Natural killer cell (primary cell): ENCODE measurements at regions of chr6 and their contacts with region 1.

Region 1: DNA sequence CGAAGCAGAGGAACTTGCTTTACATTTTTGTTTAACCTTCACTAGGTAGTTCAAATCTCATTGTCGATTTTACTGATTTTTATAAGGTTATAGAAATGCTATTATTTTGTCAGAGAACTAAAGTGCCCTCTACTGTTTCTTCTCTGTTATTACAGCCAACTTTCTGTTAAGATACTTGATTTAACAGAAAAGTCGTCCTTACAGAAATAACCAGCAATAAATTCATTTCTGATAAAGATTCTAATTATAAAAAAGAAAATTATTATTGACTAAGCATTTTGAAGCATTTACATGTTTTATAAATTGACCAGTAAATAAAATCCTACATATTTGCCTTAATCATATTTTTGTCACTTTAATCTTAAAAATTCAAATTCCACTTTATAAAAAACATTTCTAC is 60.8 kb downstream of the OGFRL1 start:
- DNase-seq: peak in 1 of 2 donors; percentile 49
- ATAC-seq: peak in 1 of 3 donors; percentile 40
- H3K4me3 ChIP-seq: no peak overlapping the region
- H3K4me3 Mint-ChIP-seq: no peak overlapping the region
- H3K27ac ChIP-seq: no peak overlapping the region
- H3K27ac Mint-ChIP-seq: no peak overlapping the region
- H3K4me1 ChIP-seq: no peaks in the 10 kb centered on the region
- H3K4me1 Mint-ChIP-seq: no peaks in the 10 kb centered on the region
- H3K27me3 ChIP-seq: no peaks in the 10 kb centered on the region
- H3K27me3 Mint-ChIP-seq: peaks cover 3 to 6% of the 10 kb centered on the region in 2 donors
- CTCF ChIP-seq: peak; percentile 81

Region 2: DNA sequence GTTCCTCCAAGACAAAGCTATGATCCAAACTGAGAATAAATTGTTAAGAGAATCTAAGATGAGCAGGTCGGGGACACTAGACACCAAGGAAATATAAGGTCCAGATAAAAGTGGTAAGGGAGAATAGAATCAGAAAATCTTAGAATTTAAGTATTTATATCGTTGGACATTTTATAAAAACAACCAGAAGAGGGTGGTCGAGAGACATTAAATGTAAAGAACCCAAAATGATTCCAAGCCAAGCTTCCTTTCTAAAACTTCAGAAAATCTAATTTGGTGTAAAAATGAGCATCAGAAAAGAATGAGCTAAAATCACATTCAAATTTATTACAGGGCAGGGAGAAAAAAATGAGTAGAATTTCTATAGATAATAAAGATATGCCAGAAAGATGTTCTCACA is 158.6 kb before region 1 on chr6:
- intact Hi-C with region 1: loop called (anchors 1 kb)
- DNase-seq: peak in 1 of 2 donors; percentile 49
- ATAC-seq: no peak
- H3K4me3 ChIP-seq: no peak overlapping the region
- H3K4me3 Mint-ChIP-seq: no peak overlapping the region
- H3K27ac ChIP-seq: no peak overlapping the region
- H3K27ac Mint-ChIP-seq: no peak overlapping the region
- H3K4me1 ChIP-seq: no peaks in the 10 kb centered on the region
- H3K4me1 Mint-ChIP-seq: no peaks in the 10 kb centered on the region
- H3K27me3 ChIP-seq: no peaks in the 10 kb centered on the region
- H3K27me3 Mint-ChIP-seq: peaks cover 0 to 13% of the 10 kb centered on the region in 2 donors
- CTCF ChIP-seq: peak; percentile 55

Region 3: DNA sequence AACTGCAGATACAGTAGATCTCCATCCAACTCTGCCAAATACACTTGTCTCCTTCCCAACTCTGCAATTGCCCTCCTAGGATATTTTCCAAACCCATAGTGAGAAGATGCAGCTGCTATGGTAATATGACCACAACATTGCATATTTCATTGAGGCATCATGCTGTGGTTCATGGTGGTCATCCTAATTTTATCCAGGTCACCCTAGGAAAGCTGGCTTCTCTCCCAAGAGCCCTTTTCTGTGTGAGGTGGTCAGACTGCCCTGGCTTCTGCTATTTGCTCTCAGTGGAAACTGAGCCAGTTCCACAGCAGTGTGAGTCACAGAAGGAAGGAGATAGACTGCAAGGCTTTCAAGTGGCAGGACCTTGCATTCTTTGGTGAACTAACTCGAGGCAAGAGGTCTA is 55.3 kb before region 1 on chr6:
- intact Hi-C with region 1: no loop called
- DNase-seq: no peak
- ATAC-seq: no peak
- H3K4me3 ChIP-seq: no peak overlapping the region
- H3K4me3 Mint-ChIP-seq: no peak overlapping the region
- H3K27ac ChIP-seq: no peak overlapping the region
- H3K27ac Mint-ChIP-seq: no peak overlapping the region
- H3K4me1 ChIP-seq: peaks cover 17% of the 10 kb centered on the region
- H3K4me1 Mint-ChIP-seq: peaks cover 30 to 34% of the 10 kb centered on the region in 2 donors
- H3K27me3 ChIP-seq: no peaks in the 10 kb centered on the region
- H3K27me3 Mint-ChIP-seq: no peaks in the 10 kb centered on the region
- CTCF ChIP-seq: no peak

Region 4: GRCh38 chr6:71404145-71404966 is 55.0 kb after region 1 on chr6:
- intact Hi-C with region 1: no loop called
- DNase-seq: no peak
- ATAC-seq: no peak
- H3K4me3 ChIP-seq: no peak overlapping the region
- H3K4me3 Mint-ChIP-seq: no peak overlapping the region
- H3K27ac ChIP-seq: no peak overlapping the region
- H3K27ac Mint-ChIP-seq: no peak overlapping the region
- H3K4me1 ChIP-seq: no peaks in the 10 kb centered on the region
- H3K4me1 Mint-ChIP-seq: no peaks in the 10 kb centered on the region
- H3K27me3 ChIP-seq: no peaks in the 10 kb centered on the region
- H3K27me3 Mint-ChIP-seq: peaks cover 0 to 27% of the 10 kb centered on the region in 2 donors
- CTCF ChIP-seq: no peak

Region 5: GRCh38 chr6:71457929-71458328 is 108.5 kb after region 1 on chr6:
- intact Hi-C with region 1: no loop called
- DNase-seq: no peak
- ATAC-seq: no peak
- H3K4me3 ChIP-seq: no peak overlapping the region
- H3K4me3 Mint-ChIP-seq: no peak overlapping the region
- H3K27ac ChIP-seq: no peak overlapping the region
- H3K27ac Mint-ChIP-seq: no peak overlapping the region
- H3K4me1 ChIP-seq: no peaks in the 10 kb centered on the region
- H3K4me1 Mint-ChIP-seq: no peaks in the 10 kb centered on the region
- H3K27me3 ChIP-seq: no peaks in the 10 kb centered on the region
- H3K27me3 Mint-ChIP-seq: no peaks in the 10 kb centered on the region
- CTCF ChIP-seq: no peak